Activated CD4-positive, alpha-beta T cell treated with anti-CD3 and anti-CD28 coated beads, Interleukin-2, amount 10 ng/mL, durations not matched to agents 24 days and 14 days (primary cell): ENCODE measurements at regions of chr2 and their contacts with region 1.

Region 1: GRCh38 chr2:69601179-69601612 is 42.3 kb downstream of the AAK1 start:
- DNase-seq: no peak
- H3K4me3 Mint-ChIP-seq: no peak overlapping the region
- H3K27ac Mint-ChIP-seq: peak overlapping the region; percentile 23
- H3K4me1 Mint-ChIP-seq: peaks cover 69% of the 10 kb centered on the region
- H3K27me3 Mint-ChIP-seq: no peaks in the 10 kb centered on the region

Region 2: DNA sequence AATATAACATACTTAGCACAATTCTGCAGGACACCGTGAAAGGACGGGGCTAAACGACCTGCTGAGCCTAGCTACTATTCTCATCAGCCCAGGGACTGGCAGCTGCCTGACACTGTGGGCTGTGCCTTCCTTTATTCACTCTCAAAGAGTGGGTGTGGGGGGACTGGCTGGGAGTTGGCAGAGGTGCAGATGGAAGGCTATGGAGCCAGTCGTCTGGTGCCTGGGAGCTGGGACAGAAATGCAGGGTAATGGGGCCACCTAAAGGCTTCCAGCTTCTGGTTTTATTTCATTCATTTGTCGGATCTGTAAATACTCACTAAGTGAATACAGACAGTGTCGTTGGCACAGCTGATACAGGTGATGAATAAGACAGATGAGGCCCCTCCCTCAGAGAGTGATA is 107.9 kb before region 1 on chr2:
- intact Hi-C with region 1: no loop called
- DNase-seq: no peak
- H3K4me3 Mint-ChIP-seq: no peak overlapping the region
- H3K27ac Mint-ChIP-seq: no peak overlapping the region
- H3K4me1 Mint-ChIP-seq: peaks cover 36% of the 10 kb centered on the region
- H3K27me3 Mint-ChIP-seq: no peaks in the 10 kb centered on the region

Region 3: DNA sequence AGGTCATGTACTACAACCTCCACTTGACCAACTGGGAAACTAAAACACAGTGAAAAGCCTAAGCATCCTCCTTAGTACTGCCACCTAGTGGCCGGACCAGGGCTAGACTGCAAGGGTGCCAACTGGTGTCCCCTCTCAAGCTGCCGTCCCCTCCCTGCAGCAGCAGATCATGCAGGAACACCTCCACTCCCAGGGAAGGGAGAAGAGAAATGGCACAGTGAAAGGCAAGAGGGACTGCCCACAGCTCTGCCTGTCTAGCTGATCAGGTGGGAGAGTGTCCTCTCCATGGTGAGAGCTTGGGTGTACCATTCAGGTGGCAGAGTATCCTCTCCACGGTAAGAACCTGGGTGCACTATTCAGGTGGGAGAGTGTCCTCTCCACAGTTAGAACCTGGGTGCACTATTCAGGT is 35.8 kb before region 1 on chr2:
- intact Hi-C with region 1: loop called (anchors 5 kb)
- DNase-seq: peak; percentile 92
- H3K4me3 Mint-ChIP-seq: no peak overlapping the region
- H3K27ac Mint-ChIP-seq: no peak overlapping the region
- H3K4me1 Mint-ChIP-seq: peaks cover 58% of the 10 kb centered on the region
- H3K27me3 Mint-ChIP-seq: no peaks in the 10 kb centered on the region

Region 4: DNA sequence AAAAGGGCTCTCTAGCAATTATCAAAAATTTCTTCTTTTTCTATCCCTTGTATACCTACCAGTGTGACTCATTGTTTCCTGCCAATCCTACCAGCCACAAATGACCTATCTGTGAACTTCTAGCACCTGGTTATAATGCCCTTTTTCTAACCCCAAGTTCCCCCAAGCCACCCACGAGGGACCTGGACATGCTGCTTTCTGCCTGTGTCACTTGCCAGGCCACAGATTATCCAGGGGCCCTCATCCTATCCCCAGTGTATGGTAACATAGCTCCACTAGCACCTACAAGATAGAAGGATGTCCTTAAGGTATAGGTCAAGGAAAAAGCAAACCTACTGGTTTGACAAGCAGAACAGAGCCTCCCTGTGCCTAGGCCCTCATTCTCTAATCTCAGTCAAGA is 15.6 kb after region 1 on chr2:
- intact Hi-C with region 1: loop called (anchors 2 kb)
- DNase-seq: peak; percentile 74
- H3K4me3 Mint-ChIP-seq: peak overlapping the region; percentile 60
- H3K27ac Mint-ChIP-seq: peak overlapping the region; percentile 86
- H3K4me1 Mint-ChIP-seq: peaks cover 31% of the 10 kb centered on the region
- H3K27me3 Mint-ChIP-seq: no peaks in the 10 kb centered on the region

Region 5: DNA sequence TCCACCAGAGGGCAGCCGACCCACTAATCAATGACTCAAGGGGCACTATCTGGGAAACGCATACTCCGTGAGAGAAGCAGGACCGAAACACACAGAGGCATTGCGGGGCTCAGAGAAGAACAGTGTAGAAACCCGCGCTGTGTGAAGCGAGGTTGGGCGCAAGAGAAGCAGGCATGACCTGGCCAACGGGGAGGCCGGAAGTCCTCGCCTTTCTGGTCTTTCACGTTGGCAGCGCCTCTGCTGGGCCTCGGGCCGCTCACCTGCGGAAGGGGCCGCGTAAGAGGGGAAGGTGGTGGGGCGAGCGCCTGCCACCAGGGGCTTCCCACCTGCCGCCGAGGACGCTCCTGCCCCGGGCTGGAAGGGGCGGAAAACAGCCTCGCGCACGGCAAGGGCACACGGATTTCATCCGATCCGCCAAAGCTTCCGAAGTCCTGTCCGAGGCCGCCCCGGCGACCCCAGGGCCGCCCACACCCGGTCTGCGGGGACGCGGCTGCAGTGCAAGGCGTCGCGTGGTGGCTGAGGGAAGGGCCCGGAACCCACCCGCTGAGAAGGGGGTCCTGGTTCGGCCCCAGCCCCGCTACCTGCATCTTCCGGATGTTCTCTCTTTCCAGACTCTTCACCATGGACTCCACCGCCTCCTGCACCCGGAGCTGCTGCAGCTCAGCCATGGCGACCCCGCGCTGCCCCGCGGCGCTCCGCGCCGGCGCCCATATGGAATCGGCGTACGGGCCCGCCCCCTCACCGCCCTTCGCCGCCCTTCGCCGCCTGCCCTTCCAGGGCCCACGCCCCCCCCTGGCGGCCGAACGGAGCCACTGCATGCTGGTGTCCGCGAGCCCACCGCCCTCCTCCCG is 700.4 kb after region 1 on chr2 and contains the start of gene FAM136A:
- intact Hi-C with region 1: no loop called
- DNase-seq: peak; percentile 97
- H3K4me3 Mint-ChIP-seq: peak within 1 kb of the TSS; percentile 91
- H3K27ac Mint-ChIP-seq: peak within 1 kb of the TSS; percentile 93
- H3K4me1 Mint-ChIP-seq: peaks cover 39% of the 10 kb centered on the region
- H3K27me3 Mint-ChIP-seq: no peaks in the 10 kb centered on the region
- total RNA-seq, gene FAM136A: 85.5 and 89.7 TPM in 2 replicates